Activated B cell treated with CpG ODN at 0.5 μM for 24 hours (primary cell): ENCODE measurements at regions of chr9 and their contacts with region 1.

Region 1: DNA sequence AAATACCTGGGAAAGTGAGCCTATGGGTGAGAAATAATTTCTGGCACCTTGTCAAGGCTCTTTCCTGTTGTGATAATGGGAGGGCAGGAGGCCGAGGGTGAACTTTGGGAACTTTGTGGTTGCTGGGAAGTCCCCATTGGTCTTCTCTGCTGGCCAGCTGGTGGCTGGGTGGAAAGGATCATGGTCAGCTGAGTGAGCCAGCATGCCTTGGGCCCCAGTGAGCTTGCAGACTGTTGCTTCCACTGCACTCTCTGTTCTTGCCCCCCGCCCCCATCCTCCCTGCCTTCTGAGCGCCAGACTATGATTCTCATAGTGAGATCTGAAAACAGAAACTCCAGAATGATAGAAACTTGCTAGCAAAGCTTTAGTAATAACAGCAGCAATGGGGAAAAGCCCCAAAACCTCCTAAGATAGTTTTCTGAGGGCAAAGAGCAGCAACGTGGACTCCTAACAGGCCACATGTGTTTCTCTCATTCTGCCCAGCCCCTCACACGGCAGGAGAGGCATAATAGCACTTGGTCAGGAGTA is 139.2 kb upstream of the SMARCA2 start:
- DNase-seq: peak; percentile 24
- ATAC-seq: peak; percentile 59
- H3K4me3 Mint-ChIP-seq: peak overlapping the region; percentile 46
- H3K27ac Mint-ChIP-seq: peak overlapping the region; percentile 95
- H3K4me1 Mint-ChIP-seq: peaks cover 30% of the 10 kb centered on the region
- H3K27me3 Mint-ChIP-seq: no peaks in the 10 kb centered on the region
- CTCF ChIP-seq: no peak

Region 2: DNA sequence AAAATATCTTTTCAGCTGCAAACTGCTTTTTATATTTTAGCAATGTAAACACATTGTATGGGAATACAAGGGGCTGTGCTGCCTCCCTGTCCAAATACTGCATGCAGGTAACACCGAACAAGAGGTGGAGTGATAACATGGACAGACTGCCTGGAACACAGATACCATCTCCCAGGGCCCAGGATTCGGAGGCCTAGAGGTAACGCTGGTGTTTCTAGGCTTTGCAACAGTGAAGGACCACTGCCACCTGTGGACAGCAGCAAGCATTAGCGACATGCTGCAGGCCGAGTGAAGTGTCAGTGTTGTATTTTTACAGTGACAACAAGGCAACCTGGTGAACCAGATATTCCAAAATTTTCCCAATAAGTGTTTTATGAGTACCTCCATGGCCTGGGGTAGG is 446.7 kb before region 1 on chr9:
- CTCF ChIA-PET with region 1: no interaction called
- POLR2A ChIA-PET with region 1: no interaction called
- intact Hi-C with region 1: no loop called
- DNase-seq: no peak
- ATAC-seq: no peak
- H3K4me3 Mint-ChIP-seq: no peak overlapping the region
- H3K27ac Mint-ChIP-seq: no peak overlapping the region
- H3K4me1 Mint-ChIP-seq: no peaks in the 10 kb centered on the region
- H3K27me3 Mint-ChIP-seq: no peaks in the 10 kb centered on the region
- CTCF ChIP-seq: no peak

Region 3: GRCh38 chr9:1929722-1930621 is 54.0 kb after region 1 on chr9:
- CTCF ChIA-PET with region 1: no interaction called
- POLR2A ChIA-PET with region 1: interaction called, 13 read pairs
- intact Hi-C with region 1: loop called (anchors 1 kb)
- DNase-seq: no peak
- ATAC-seq: peak; percentile 79
- H3K4me3 Mint-ChIP-seq: peak overlapping the region; percentile 40
- H3K27ac Mint-ChIP-seq: peak overlapping the region; percentile 69
- H3K4me1 Mint-ChIP-seq: peaks cover 16% of the 10 kb centered on the region
- H3K27me3 Mint-ChIP-seq: no peaks in the 10 kb centered on the region
- CTCF ChIP-seq: no peak

Region 4: DNA sequence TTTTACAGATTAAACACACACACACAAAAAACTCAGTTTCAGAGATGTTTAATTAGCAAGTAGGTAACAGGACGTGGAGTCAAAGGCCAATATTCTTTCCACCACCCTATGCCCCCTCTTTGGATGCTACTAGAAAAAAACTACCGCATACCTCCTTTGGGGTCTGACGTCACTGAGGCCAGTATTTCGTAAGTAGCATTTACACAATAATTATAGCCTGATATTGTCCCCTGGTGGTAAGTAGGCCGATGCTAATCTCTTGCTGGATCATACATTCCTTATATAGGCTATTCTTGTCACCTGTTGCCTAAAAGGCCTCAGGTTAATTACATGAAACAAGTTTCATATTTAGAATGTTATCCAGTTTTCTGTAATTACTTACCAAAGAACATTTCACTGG is 118.2 kb after region 1 on chr9:
- CTCF ChIA-PET with region 1: no interaction called
- POLR2A ChIA-PET with region 1: no interaction called
- intact Hi-C with region 1: no loop called
- DNase-seq: no peak
- ATAC-seq: no peak
- H3K4me3 Mint-ChIP-seq: no peak overlapping the region
- H3K27ac Mint-ChIP-seq: no peak overlapping the region
- H3K4me1 Mint-ChIP-seq: no peaks in the 10 kb centered on the region
- H3K27me3 Mint-ChIP-seq: peaks cover 9% of the 10 kb centered on the region
- CTCF ChIP-seq: no peak

Region 5: DNA sequence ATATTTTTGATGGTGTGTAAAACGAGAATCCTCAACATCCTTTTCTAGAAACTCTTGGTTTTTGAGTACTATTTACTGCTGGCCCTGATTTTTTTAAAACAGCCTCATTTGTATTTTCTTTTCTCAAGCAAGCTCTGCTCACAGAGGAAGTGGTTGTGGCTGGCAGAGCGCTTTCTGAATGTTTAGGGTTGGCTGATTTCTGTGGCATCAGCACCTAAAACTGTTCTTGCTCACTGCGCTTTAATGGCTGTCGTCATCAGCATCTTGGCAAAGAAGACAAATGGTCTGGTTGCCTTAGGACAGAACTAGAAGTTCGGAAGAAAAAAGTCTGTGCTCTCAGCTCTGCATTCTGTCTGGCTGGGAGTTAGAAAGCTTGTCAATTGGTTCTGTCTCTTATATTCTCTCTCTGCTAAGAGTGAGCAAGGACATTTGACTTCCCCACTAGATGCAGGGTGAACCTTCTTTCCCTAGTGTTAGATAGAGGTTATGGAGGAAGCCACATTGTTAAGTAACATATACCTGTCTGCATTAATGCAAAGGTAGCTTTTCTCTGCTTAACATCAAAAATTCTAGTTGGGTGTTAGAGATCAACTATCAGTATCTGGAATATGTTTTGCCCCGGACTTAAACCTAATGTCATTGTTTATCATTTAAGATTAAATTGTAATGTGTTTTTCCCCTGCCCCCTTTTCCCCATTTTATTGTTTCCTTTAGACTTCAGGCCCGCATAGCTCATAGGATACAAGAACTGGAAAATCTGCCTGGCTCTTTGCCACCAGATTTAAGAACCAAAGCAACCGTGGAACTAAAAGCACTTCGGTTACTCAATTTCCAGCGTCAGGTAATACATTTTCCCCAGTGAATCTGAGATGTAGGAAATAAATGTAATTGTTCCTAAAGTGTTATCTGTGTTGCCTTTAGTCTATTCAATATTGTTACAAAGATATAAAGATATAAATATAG is 178.2 kb after region 1 on chr9:
- CTCF ChIA-PET with region 1: no interaction called
- POLR2A ChIA-PET with region 1: interaction called, 7 read pairs
- intact Hi-C with region 1: loop called (anchors 1 kb)
- DNase-seq: peak; percentile 27
- ATAC-seq: peak; percentile 92
- H3K4me3 Mint-ChIP-seq: peak overlapping the region; percentile 55
- H3K27ac Mint-ChIP-seq: peak overlapping the region; percentile 85
- H3K4me1 Mint-ChIP-seq: peaks cover 29% of the 10 kb centered on the region
- H3K27me3 Mint-ChIP-seq: no peaks in the 10 kb centered on the region
- CTCF ChIP-seq: no peak